MCF 10A (cell line): ENCODE measurements at regions of chr11 and their contacts with region 1.

Region 1: GRCh38 chr11:85595285-85595884 is 31.8 kb downstream of the DLG2 start:
- DNase-seq: peak; percentile 56
- H3K4me3 Mint-ChIP-seq: no peak overlapping the region
- H3K27ac Mint-ChIP-seq: no peak overlapping the region
- H3K4me1 Mint-ChIP-seq: no peaks in the 10 kb centered on the region
- H3K27me3 Mint-ChIP-seq: peaks cover 18% of the 10 kb centered on the region
- CTCF ChIP-seq: peak; percentile 56

Region 2: GRCh38 chr11:84780689-84781293 is 814.6 kb before region 1 on chr11:
- CTCF ChIA-PET with region 1: interaction called, 8 read pairs
- POLR2A ChIA-PET with region 1: no interaction called
- intact Hi-C with region 1: loop called (anchors 1 kb)
- DNase-seq: peak; percentile 24
- H3K4me3 Mint-ChIP-seq: no peak overlapping the region
- H3K27ac Mint-ChIP-seq: no peak overlapping the region
- H3K4me1 Mint-ChIP-seq: no peaks in the 10 kb centered on the region
- H3K27me3 Mint-ChIP-seq: peaks cover 64% of the 10 kb centered on the region
- CTCF ChIP-seq: peak; percentile 37

Region 3: DNA sequence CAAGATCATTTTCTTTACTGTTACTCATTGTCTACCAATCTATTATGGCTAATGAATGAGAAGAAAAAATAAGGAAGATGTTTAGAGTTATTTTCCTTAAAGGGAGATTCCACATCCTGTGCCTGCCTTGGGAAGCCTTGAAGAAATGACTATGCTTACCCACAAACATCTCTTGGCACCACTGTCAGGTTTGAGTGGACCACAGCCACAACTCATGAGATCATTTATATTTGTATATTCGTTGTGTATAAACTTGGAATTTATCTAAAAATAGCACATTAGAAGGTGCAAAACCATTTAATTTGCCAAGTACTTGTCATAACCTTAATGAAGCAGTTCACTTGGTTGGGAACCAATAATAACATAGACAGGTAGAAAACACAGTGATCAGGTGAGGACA is 709.0 kb before region 1 on chr11:
- CTCF ChIA-PET with region 1: no interaction called
- POLR2A ChIA-PET with region 1: no interaction called
- intact Hi-C with region 1: no loop called
- DNase-seq: no peak
- H3K4me3 Mint-ChIP-seq: no peak overlapping the region
- H3K27ac Mint-ChIP-seq: no peak overlapping the region
- H3K4me1 Mint-ChIP-seq: no peaks in the 10 kb centered on the region
- H3K27me3 Mint-ChIP-seq: peaks cover 22% of the 10 kb centered on the region
- CTCF ChIP-seq: no peak

Region 4: GRCh38 chr11:85664615-85665481 is 69.5 kb after region 1 on chr11 and contains the start of gene CREBZF:
- CTCF ChIA-PET with region 1: no interaction called
- POLR2A ChIA-PET with region 1: no interaction called
- intact Hi-C with region 1: loop called (anchors 1 kb)
- DNase-seq: peak; percentile 96
- H3K4me3 Mint-ChIP-seq: peak within 1 kb of the TSS; percentile 95
- H3K27ac Mint-ChIP-seq: peak within 1 kb of the TSS; percentile 95
- H3K4me1 Mint-ChIP-seq: peaks cover 27% of the 10 kb centered on the region
- H3K27me3 Mint-ChIP-seq: no peaks in the 10 kb centered on the region
- CTCF ChIP-seq: no peak
- total RNA-seq, gene CREBZF: 34.3 and 36.0 TPM in 2 replicates

Region 5: GRCh38 chr11:85854557-85855340 is 259.4 kb after region 1 on chr11:
- CTCF ChIA-PET with region 1: interaction called, 3 read pairs
- POLR2A ChIA-PET with region 1: no interaction called
- intact Hi-C with region 1: loop called (anchors 2 kb)
- DNase-seq: peak; percentile 85
- H3K4me3 Mint-ChIP-seq: peak overlapping the region; percentile 76
- H3K27ac Mint-ChIP-seq: peak overlapping the region; percentile 87
- H3K4me1 Mint-ChIP-seq: no peaks in the 10 kb centered on the region
- H3K27me3 Mint-ChIP-seq: no peaks in the 10 kb centered on the region
- CTCF ChIP-seq: peak; percentile 86

Region 6: DNA sequence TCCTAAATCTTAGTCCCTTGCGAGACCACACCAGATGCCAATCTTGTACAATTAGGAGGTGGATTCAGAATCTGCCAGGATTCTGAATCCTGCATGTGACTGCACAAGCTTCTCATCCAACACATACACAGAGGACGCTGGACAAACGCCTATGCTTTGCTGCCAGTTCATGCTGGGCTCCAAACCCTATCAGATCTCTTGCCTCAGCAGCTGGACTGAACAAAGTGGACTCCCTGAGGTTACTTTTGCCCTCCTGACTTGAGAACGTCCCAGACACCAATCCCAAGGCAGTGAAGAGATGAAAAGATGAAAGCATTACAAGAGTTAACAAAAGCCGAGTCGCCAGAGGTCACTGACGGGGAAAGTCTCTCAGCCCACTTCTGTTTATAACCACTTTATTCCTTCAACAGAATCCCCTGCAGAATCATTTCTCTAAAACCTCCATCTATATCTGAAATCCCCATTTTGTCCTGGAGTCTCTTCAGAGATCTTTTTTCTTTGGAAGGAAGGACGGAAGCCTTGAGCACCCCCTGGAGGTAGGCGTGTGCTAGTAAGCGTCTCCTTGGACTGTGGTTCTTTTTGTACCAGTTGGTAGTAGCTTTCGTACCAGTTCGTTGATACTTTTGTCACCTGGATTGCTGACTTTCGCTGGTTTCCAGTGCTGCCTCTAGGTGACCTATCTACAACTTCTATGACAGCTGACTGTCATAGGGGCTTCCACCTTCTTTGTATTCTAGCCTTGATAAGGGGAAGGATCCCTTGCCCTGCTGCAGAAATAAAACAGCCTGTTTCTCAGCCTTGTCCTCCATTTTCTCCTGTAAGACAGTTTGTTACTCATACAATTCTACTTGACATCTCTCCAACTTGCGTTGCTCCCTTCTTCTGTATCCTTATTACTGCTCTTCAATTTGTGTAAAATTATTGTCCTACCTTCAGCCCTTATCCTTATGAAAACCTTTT is 623.0 kb after region 1 on chr11:
- CTCF ChIA-PET with region 1: no interaction called
- POLR2A ChIA-PET with region 1: no interaction called
- intact Hi-C with region 1: loop called (anchors 5 kb)
- DNase-seq: peak; percentile 79
- H3K4me3 Mint-ChIP-seq: no peak overlapping the region
- H3K27ac Mint-ChIP-seq: no peak overlapping the region
- H3K4me1 Mint-ChIP-seq: peaks cover 6% of the 10 kb centered on the region
- H3K27me3 Mint-ChIP-seq: no peaks in the 10 kb centered on the region
- CTCF ChIP-seq: peak; percentile 81